ENCODE measurements at regions of chr6 and their contacts with region 1.

Region 1: DNA sequence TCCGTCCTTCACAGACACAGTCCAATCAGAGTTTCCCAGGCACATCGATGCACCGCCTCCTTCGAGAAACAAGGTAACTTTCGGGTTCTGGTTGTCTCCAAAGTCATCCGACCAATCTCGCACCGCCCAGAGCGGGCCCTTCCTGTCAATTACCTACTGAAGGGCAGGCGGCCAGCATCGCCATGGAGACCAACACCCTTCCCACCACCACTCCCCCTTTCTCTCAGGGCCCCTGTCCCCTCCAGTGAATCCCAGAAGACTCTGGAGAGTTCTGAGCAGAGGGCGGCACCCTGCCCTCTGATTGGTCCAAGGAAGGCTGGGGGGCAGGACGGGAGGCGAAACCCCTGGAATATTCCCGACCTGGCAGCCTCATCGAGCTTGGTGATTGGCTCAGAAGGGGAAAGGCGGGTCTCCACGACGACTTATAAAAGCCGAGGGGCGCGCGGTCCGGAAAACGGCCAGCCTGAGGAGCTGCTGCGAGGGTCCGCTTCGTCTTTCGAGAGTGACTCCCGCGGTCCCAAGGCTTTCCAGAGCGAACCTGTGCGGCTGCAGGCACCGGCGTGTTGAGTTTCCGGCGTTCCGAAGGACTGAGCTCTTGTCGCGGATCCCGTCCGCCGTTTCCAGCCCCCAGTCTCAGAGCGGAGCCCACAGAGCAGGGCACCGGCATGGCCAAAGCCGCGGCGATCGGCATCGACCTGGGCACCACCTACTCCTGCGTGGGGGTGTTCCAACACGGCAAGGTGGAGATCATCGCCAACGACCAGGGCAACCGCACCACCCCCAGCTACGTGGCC is at the start of gene HSPA1B:
- DNase-seq: peak; percentile 100
- ATAC-seq: peak; percentile 79 to 80
- H3K4me3 ChIP-seq: peak within 1 kb of the TSS; percentile 73 to 92 (median 76)
- H3K27ac ChIP-seq: peak within 1 kb of the TSS; percentile 97 to 98 (median 97)
- H3K4me1 ChIP-seq: peaks cover 37 to 39% of the 10 kb centered on the region in 2 donors
- H3K27me3 ChIP-seq: no peaks in the 10 kb centered on the region
- CTCF ChIP-seq: peak in 2 of 5 experiments; percentile 16 to 17
- POLR2A ChIP-seq: peak; percentile 100
- total RNA-seq, gene HSPA1B: 71.5 to 178 (median 112) TPM

Region 2: DNA sequence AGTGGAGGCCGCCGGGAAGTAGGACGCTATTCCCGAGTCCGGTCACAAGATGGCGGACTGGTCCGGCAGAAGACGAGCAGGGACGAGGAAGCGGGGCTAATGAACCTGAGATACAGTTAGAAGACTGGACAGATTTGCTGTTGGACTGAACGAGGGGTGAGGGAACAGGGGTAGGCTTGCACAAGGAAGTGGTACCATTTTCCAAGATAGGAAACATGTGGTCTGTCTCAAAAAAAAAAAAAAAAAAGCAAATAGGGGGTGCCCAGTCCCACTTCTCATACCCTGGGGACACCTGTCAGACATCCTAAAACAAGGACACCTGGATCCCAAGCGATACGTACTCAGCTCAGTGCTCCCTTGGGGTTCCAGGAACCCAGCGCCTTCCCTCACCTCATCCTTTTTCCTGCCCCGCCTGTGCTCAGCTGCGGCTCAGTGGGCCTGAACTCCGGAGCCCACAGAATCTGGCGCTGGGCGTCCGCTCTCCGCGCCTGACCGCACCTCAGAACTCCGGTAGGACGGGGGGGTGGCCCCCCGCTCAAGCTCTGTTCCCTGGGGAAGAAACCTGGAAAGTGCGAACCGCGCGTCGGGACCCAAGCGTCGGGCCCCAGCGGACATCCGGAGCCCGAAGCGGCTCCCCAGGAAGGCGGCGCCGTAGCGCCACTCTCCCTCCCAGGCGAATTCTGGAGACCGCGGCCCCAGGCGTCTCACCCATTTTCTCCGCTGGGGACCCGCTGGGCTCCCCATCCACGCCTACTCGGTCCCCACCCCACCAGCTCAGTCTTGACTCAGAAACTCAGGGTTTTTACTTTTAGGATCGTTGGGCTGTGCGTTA is 146.4 kb before region 1 on chr6 and contains the start of gene LY6G5C:
- in situ Hi-C with region 1: loop called in 2 of 4 experiments (anchors 10 kb)
- intact Hi-C with region 1: loop called (anchors 1 kb)
- DNase-seq: peak; percentile 77 to 82
- ATAC-seq: peak; percentile 97
- H3K4me3 ChIP-seq: peak within 1 kb of the TSS; percentile 43 to 85 (median 66)
- H3K27ac ChIP-seq: peak within 1 kb of the TSS; percentile 22 to 74 (median 56)
- H3K4me1 ChIP-seq: peaks cover 13% of the 10 kb centered on the region in 2 donors
- H3K27me3 ChIP-seq: no peaks in the 10 kb centered on the region
- CTCF ChIP-seq: peak; percentile 60 to 80 (median 76)
- POLR2A ChIP-seq: no peak
- total RNA-seq, gene LY6G5C: 1.3 to 3.2 TPM in 2 of 4 donors, not detected in the others

Region 3: GRCh38 chr6:31776989-31777666 is 50.4 kb before region 1 on chr6 and contains the start of gene VWA7:
- in situ Hi-C with region 1: loop called in 2 of 4 experiments (anchors 10 kb)
- intact Hi-C with region 1: loop called (anchors 1 kb)
- DNase-seq: peak; percentile 45 to 89
- ATAC-seq: peak; percentile 70 to 89
- H3K4me3 ChIP-seq: peak within 1 kb of the TSS; percentile 26 to 44 (median 37)
- H3K27ac ChIP-seq: peak within 1 kb of the TSS; percentile 83 to 88 (median 86)
- H3K4me1 ChIP-seq: peaks cover 11 to 17% of the 10 kb centered on the region in 2 donors
- H3K27me3 ChIP-seq: no peaks in the 10 kb centered on the region
- CTCF ChIP-seq: no peak
- POLR2A ChIP-seq: peak in 1 of 2 donors; percentile 31
- total RNA-seq, gene VWA7: 2.0 to 7.8 (median 4.7) TPM

Region 4: DNA sequence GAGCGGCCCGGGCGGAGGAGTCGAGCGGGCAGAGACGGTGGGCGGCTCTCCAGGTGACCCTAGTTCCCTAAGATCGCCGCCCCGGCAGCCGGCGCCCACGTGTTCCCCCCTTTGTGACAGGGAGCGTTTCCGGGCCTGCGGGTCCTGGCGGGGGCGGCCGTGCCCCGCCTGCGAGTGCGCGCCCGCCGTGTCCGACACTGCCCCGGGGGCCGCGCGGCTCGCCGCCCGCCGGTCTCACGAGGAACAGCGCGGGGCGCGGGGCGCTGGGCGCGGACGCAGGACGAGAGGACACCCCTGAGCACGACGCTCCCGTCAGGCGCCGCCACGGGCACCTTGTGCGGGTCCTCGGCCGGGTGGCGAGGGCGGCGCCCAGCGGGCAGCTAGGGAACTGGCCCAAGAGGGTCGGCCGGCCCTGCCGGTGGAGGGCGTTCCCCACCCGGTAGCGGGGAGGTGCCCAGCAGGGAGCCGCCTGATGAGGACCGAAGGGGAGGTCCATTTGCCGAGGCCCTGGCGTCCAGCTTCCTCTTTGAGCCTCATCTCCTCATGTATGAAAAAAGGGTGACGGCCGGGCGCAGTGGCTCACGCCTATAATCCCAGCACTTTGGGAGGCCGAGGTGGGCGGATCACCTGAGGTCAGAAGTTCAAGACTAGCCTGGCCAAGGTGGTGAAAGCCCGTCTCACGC is 31.7 kb before region 1 on chr6 and contains the start of gene VARS1:
- in situ Hi-C with region 1: no loop called
- intact Hi-C with region 1: loop called (anchors 1 kb)
- DNase-seq: peak; percentile 86 to 89
- ATAC-seq: peak; percentile 86 to 92
- H3K4me3 ChIP-seq: peak within 1 kb of the TSS; percentile 64 to 99 (median 82)
- H3K27ac ChIP-seq: peak within 1 kb of the TSS; percentile 85 to 97 (median 93)
- H3K4me1 ChIP-seq: peaks cover 24 to 26% of the 10 kb centered on the region in 2 donors
- H3K27me3 ChIP-seq: no peaks in the 10 kb centered on the region
- CTCF ChIP-seq: peak; percentile 86 to 97 (median 95)
- POLR2A ChIP-seq: peak; percentile 79 to 89
- total RNA-seq, gene VARS1: 39.2 to 102 (median 67.4) TPM

Region 5: GRCh38 chr6:32244946-32245398 is 417.5 kb after region 1 on chr6:
- in situ Hi-C with region 1: no loop called
- intact Hi-C with region 1: no loop called
- DNase-seq: peak; percentile 39 to 63
- ATAC-seq: peak; percentile 74 to 81
- H3K4me3 ChIP-seq: peak overlapping the region in 1 of 4 donors; percentile 33
- H3K27ac ChIP-seq: peak overlapping the region; percentile 17 to 72 (median 60)
- H3K4me1 ChIP-seq: peaks cover 5 to 6% of the 10 kb centered on the region in 2 donors
- H3K27me3 ChIP-seq: no peaks in the 10 kb centered on the region
- CTCF ChIP-seq: peak; percentile 70 to 89 (median 86)
- POLR2A ChIP-seq: no peak

Measured in gastrocnemius medialis (tissue), 4 donors.